ENCODE measurements at regions of chr10 and their contacts with region 1.

Region 1: GRCh38 chr10:62594093-62594520 is 210.4 kb upstream of the ADO start:
- DNase-seq: peak; percentile 10 to 70 (median 42)
- ATAC-seq: peak; percentile 65
- H3K4me3 ChIP-seq: no peak overlapping the region
- H3K4me3 Mint-ChIP-seq: no peak overlapping the region
- H3K27ac ChIP-seq: no peak overlapping the region
- H3K27ac Mint-ChIP-seq: no peak overlapping the region
- H3K4me1 ChIP-seq: no peaks in the 10 kb centered on the region
- H3K4me1 Mint-ChIP-seq: no peaks in the 10 kb centered on the region
- H3K27me3 ChIP-seq: no peaks in the 10 kb centered on the region
- H3K27me3 Mint-ChIP-seq: no peaks in the 10 kb centered on the region
- CTCF ChIP-seq: peak; percentile 97

Region 2: GRCh38 chr10:62437696-62438095 is 156.4 kb before region 1 on chr10:
- CTCF ChIA-PET with region 1: interaction called, 11 read pairs
- POLR2A ChIA-PET with region 1: no interaction called
- intact Hi-C with region 1: loop called in 1 of 2 experiments (anchors 2 kb)
- DNase-seq: peak in 3 of 9 experiments; percentile 20 to 72 (median 65)
- ATAC-seq: peak; percentile 66
- H3K4me3 ChIP-seq: no peak overlapping the region
- H3K4me3 Mint-ChIP-seq: no peak overlapping the region
- H3K27ac ChIP-seq: no peak overlapping the region
- H3K27ac Mint-ChIP-seq: no peak overlapping the region
- H3K4me1 ChIP-seq: no peaks in the 10 kb centered on the region
- H3K4me1 Mint-ChIP-seq: no peaks in the 10 kb centered on the region
- H3K27me3 ChIP-seq: no peaks in the 10 kb centered on the region
- H3K27me3 Mint-ChIP-seq: peaks cover 6% of the 10 kb centered on the region
- CTCF ChIP-seq: peak; percentile 95

Region 3: DNA sequence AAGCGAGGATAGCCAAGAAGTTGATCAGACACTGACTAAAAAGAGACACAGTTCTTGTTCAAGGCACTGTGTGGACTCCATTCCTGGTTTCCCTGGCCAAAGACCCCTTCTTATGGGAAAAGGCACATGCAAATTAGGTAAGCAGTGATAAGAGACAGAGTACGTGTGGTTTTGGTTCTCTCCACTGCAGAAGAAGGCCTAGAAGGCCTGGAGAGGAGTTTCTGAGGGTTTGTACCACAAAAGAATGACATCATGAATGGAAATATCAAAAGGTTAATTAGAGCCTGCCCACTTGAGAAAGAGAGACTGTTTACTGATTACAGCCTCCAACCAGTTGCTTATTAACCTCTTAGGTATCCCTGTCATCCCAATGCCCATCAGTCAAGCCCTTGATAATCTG is 82.5 kb before region 1 on chr10:
- CTCF ChIA-PET with region 1: no interaction called
- POLR2A ChIA-PET with region 1: no interaction called
- intact Hi-C with region 1: no loop called
- DNase-seq: no peak
- ATAC-seq: no peak
- H3K4me3 ChIP-seq: no peak overlapping the region
- H3K4me3 Mint-ChIP-seq: no peak overlapping the region
- H3K27ac ChIP-seq: no peak overlapping the region
- H3K27ac Mint-ChIP-seq: no peak overlapping the region
- H3K4me1 ChIP-seq: no peaks in the 10 kb centered on the region
- H3K4me1 Mint-ChIP-seq: no peaks in the 10 kb centered on the region
- H3K27me3 ChIP-seq: no peaks in the 10 kb centered on the region
- H3K27me3 Mint-ChIP-seq: peaks cover 5% of the 10 kb centered on the region
- CTCF ChIP-seq: no peak

Region 4: GRCh38 chr10:62582804-62583208 is 11.3 kb before region 1 on chr10:
- CTCF ChIA-PET with region 1: interaction called, 20 read pairs
- POLR2A ChIA-PET with region 1: no interaction called
- intact Hi-C with region 1: no loop called
- DNase-seq: no peak
- ATAC-seq: no peak
- H3K4me3 ChIP-seq: no peak overlapping the region
- H3K4me3 Mint-ChIP-seq: no peak overlapping the region
- H3K27ac ChIP-seq: no peak overlapping the region
- H3K27ac Mint-ChIP-seq: no peak overlapping the region
- H3K4me1 ChIP-seq: no peaks in the 10 kb centered on the region
- H3K4me1 Mint-ChIP-seq: no peaks in the 10 kb centered on the region
- H3K27me3 ChIP-seq: no peaks in the 10 kb centered on the region
- H3K27me3 Mint-ChIP-seq: peaks cover 2% of the 10 kb centered on the region
- CTCF ChIP-seq: no peak

Region 5: GRCh38 chr10:63003816-63004453 is 409.8 kb after region 1 on chr10:
- CTCF ChIA-PET with region 1: interaction called, 3 read pairs
- POLR2A ChIA-PET with region 1: no interaction called
- intact Hi-C with region 1: loop called in 1 of 2 experiments (anchors 5 kb)
- DNase-seq: peak in 2 of 9 experiments; percentile 4 to 13
- ATAC-seq: no peak
- H3K4me3 ChIP-seq: no peak overlapping the region
- H3K4me3 Mint-ChIP-seq: no peak overlapping the region
- H3K27ac ChIP-seq: no peak overlapping the region
- H3K27ac Mint-ChIP-seq: no peak overlapping the region
- H3K4me1 ChIP-seq: no peaks in the 10 kb centered on the region
- H3K4me1 Mint-ChIP-seq: no peaks in the 10 kb centered on the region
- H3K27me3 ChIP-seq: peaks cover 0 to 1% of the 10 kb centered on the region in 2 experiments
- H3K27me3 Mint-ChIP-seq: peaks cover 17% of the 10 kb centered on the region
- CTCF ChIP-seq: peak; percentile 9

Region 6: GRCh38 chr10:63720072-63720537 is 1126.0 kb after region 1 on chr10:
- CTCF ChIA-PET with region 1: interaction called, 4 read pairs
- POLR2A ChIA-PET with region 1: no interaction called
- intact Hi-C with region 1: loop called (anchors 10 kb)
- DNase-seq: peak; percentile 4 to 73 (median 46)
- ATAC-seq: peak; percentile 87
- H3K4me3 ChIP-seq: no peak overlapping the region
- H3K4me3 Mint-ChIP-seq: no peak overlapping the region
- H3K27ac ChIP-seq: no peak overlapping the region
- H3K27ac Mint-ChIP-seq: no peak overlapping the region
- H3K4me1 ChIP-seq: no peaks in the 10 kb centered on the region
- H3K4me1 Mint-ChIP-seq: peaks cover 4% of the 10 kb centered on the region
- H3K27me3 ChIP-seq: peaks cover 0 to 6% of the 10 kb centered on the region in 2 experiments
- H3K27me3 Mint-ChIP-seq: peaks cover 15% of the 10 kb centered on the region
- CTCF ChIP-seq: peak; percentile 100